AG04450 (cell line): ENCODE measurements at regions of chr10 and their contacts with region 1.

Region 1: DNA sequence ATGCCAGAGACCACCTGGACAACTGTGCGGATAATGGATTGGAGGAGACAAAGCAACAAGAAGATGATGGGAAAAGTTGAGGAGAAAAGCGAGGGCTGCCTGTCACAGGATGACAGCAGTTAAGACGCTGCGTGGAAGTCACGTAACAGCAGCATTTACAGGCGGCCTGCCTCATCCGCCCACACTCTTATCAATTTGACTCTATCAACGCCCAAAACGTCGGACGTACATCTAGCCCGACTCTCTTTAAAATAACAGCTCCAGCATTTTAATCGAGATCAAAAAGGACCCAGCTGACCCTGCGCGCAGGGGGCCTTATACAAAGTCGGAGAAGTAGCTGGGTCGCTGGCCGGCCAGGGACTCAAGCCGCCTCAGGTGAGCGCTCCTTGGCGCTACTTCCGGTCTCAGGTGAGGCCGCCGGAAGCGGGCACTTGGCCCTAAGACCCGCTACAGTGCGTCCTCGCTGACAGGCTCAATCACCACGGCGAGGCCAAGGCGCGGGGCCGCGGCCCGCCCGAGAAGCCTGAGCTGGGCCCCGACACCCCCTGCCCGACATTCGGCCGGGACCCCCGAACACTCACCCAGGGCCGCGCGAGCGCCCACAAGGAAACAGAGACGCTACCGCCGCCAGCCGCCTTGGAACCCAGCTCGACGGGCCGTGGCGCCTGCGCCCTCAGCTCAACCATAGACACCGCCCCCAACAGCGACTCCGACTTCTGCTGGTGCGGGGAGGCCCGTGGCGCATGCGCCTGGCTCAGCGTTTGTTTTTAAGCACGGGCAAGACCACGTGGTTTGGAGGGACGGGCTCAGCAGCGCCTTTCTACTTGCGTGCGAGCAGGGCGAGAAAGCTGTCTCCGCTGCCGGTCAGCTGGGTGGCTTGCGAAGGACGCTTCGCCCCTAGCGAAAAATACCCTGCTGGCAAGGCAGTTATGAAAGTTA is at the start of gene ERCC6:
- DNase-seq: peak; percentile 95
- H3K4me3 ChIP-seq: peak within 1 kb of the TSS; percentile 79
- H3K27ac ChIP-seq: peak within 1 kb of the TSS; percentile 78
- H3K27me3 ChIP-seq: no peaks in the 10 kb centered on the region
- CTCF ChIP-seq: no peak
- polyA plus RNA-seq, gene ERCC6: 9.5 and 9.8 TPM in 2 replicates

Region 2: DNA sequence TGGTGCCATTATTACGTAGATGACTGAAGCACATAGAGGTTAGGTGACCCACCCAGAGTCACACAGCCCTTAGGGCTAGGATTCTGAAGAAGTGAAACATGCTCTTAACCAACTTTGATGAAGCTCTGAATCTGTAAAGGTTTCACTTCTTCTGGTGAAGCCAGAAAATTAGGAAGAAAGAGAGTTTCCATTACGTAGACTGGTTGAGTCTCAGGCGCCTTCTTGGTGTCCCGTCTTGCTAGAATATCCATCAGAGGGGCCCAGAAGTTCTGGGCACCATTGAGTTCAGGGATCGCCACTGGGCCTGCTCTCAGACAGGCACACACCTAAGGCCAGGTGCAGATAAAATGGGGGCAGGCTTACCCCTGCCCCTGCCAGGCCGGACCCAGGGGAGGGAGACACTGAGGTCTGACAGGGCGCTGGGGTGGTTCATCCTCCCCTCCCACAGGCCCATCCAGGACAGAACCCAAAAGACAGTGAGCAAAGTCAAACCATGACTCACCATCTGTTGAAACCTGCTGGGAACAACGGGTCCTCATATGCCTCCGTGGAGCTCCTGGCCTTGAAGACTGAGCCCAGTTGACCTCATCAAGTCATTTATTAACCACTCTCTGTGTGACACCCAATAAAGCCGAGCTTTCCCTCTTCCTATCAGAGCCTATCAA is 175.9 kb before region 1 on chr10:
- CTCF ChIA-PET with region 1: no interaction called
- POLR2A ChIA-PET with region 1: no interaction called
- DNase-seq: no peak
- H3K4me3 ChIP-seq: no peak overlapping the region
- H3K27ac ChIP-seq: no peak overlapping the region
- H3K27me3 ChIP-seq: peaks cover 7% of the 10 kb centered on the region
- CTCF ChIP-seq: no peak

Region 3: GRCh38 chr10:49518982-49519578 is 19.6 kb before region 1 on chr10:
- CTCF ChIA-PET with region 1: interaction called, 16 read pairs
- POLR2A ChIA-PET with region 1: interaction called, 4 read pairs
- DNase-seq: no peak
- H3K4me3 ChIP-seq: no peak overlapping the region
- H3K27ac ChIP-seq: no peak overlapping the region
- H3K27me3 ChIP-seq: no peaks in the 10 kb centered on the region
- CTCF ChIP-seq: peak; percentile 73

Region 4: GRCh38 chr10:49552249-49552672 is 13.6 kb after region 1 on chr10:
- CTCF ChIA-PET with region 1: interaction called, 13 read pairs
- POLR2A ChIA-PET with region 1: interaction called, 10 read pairs
- DNase-seq: no peak
- H3K4me3 ChIP-seq: no peak overlapping the region
- H3K27ac ChIP-seq: no peak overlapping the region
- H3K27me3 ChIP-seq: no peaks in the 10 kb centered on the region
- CTCF ChIP-seq: no peak